Endothelial cell of umbilical vein (primary cell): ENCODE measurements at regions of chr20 and their contacts with region 1.

Region 1: DNA sequence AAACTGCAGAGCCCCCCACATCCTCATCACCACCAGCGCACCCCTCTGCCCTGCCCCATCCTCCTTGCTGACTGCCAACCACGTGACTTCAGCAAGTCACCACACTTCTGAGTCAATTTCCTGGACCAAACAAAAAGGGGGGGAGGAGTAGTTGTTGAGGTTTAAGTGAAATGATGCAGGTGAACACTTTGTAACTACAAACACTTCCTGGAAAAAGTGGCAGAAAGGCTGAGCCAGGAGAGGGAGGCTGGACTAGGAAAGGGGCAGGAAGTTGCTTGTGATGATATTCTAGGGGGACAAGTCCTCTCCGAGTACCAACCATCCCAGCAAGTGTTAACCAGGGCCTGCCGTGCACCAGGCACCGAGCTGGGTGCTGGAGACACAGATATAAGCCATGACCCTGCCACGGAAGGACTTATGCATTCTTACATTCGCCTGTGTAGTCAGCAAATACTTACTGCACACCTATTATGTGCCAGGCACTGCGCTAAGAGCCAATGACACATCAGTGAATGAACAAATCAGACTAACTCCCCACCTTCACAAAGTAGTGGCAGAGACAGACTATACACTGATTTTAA is 67.3 kb downstream of the PREX1 start:
- DNase-seq: peak; percentile 84
- H3K4me3 ChIP-seq: no peak overlapping the region
- H3K27ac ChIP-seq: peak overlapping the region; percentile 80
- H3K4me1 ChIP-seq: peaks cover 47% of the 10 kb centered on the region
- H3K27me3 ChIP-seq: no peaks in the 10 kb centered on the region
- CTCF ChIP-seq: no peak
- POLR2A ChIP-seq: no peak

Region 2: GRCh38 chr20:48722737-48723191 is 37.7 kb before region 1 on chr20:
- CTCF ChIA-PET with region 1: no interaction called
- POLR2A ChIA-PET with region 1: no interaction called
- dilution Hi-C with region 1: no loop called
- intact Hi-C with region 1: loop called (anchors 2 kb)
- DNase-seq: peak; percentile 33
- H3K4me3 ChIP-seq: no peak overlapping the region
- H3K27ac ChIP-seq: peak overlapping the region; percentile 90
- H3K4me1 ChIP-seq: peaks cover 42% of the 10 kb centered on the region
- H3K27me3 ChIP-seq: no peaks in the 10 kb centered on the region
- CTCF ChIP-seq: no peak
- POLR2A ChIP-seq: no peak